Spleen (tissue), 13 donors: ENCODE measurements at regions of chr2 and their contacts with region 1.

Region 1: GRCh38 chr2:19863303-19864041 is 38.3 kb downstream of the TTC32 start:
- DNase-seq: peak; percentile 94
- H3K4me3 ChIP-seq: peak overlapping the region in 1 of 8 donors; percentile 27
- H3K27ac ChIP-seq: no peak overlapping the region
- H3K4me1 ChIP-seq: peaks cover 0 to 16% (median 13%) of the 10 kb centered on the region in 6 donors
- H3K27me3 ChIP-seq: peaks cover 0 to 16% (median 0%) of the 10 kb centered on the region in 7 donors
- CTCF ChIP-seq: peak; percentile 82 to 97 (median 93)
- POLR2A ChIP-seq: no peak

Region 2: DNA sequence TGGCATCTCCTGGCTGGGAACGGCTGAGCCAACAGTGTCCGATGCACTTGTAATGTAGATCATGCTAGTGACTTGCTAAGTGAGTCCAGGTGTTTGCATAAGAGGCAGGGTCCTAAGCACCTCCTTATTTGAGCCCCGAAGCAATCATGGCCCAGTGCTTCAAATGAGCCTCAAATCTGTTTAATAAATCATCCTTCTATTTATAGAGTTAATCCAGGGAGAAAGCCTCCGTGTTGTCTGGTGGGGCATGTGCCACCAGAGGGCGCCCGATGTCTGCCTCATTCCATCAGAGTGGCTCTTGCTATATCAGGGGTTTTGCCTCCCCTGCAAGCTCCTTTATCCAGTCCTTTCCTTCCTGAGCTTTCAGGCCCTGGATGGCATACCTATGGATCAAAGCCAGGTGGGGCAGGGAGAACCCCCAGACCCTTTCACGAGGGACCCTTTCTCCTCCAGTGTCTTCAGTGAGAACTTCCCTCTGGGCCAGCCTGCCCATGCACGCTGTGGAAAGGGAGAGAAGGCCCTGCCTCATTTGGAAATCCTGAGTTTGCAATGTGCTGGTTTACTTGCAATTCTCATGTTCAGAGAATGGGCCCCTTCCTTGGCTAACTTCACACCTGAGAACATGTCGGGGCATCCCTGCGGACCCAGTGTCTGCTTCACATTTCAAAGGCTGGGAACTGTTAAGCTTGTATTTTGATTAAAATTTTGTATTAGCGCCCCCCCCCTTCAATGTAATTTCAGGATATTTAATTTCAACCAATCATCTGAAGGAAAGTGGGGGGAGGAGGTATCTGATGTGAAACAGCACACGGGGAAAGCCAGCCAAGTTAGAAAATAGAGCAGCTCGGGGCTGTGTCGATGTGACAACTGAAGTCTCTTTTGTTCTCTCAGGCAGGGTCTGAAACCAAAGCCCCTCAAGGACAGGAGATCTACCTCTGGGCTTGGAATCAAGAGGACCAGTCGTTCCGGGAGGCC is 1342.7 kb before region 1 on chr2:
- intact Hi-C with region 1: loop called (anchors 5 kb)
- DNase-seq: peak; percentile 87
- H3K4me3 ChIP-seq: no peak overlapping the region
- H3K27ac ChIP-seq: no peak overlapping the region
- H3K4me1 ChIP-seq: no peaks in the 10 kb centered on the region
- H3K27me3 ChIP-seq: peaks cover 0 to 36% (median 0%) of the 10 kb centered on the region in 7 donors
- CTCF ChIP-seq: peak; percentile 72 to 88 (median 77)
- POLR2A ChIP-seq: no peak

Region 3: DNA sequence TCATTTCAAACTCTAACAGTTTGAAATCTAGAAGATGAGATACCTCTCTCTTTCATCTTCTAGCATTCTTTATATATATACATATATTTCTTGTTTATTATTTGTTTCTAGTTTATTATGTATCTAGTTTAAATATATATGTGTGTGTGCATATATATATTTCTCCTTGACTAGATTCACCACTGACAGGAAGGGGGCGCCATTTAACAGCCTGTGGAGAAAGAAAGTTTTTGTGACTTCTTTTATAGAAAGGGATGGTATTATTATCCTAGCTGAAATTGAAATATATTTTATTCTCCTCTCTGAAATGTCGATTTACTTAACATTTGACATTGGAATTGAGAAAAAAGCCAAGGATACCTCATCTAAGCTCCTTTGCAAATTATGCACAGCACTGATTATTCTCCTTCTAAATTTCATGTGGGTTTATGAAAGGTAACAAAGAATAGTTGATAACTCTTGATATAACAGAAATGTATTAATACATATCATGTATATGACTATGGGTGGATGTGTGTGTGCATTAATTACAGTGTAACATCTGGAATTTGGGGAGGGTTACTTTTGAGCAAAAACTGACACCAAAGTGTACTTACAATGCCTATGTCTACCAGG is 1113.5 kb before region 1 on chr2:
- intact Hi-C with region 1: loop called (anchors 5 kb)
- DNase-seq: no peak
- H3K4me3 ChIP-seq: no peak overlapping the region
- H3K27ac ChIP-seq: no peak overlapping the region
- H3K4me1 ChIP-seq: no peaks in the 10 kb centered on the region
- H3K27me3 ChIP-seq: no peaks in the 10 kb centered on the region
- CTCF ChIP-seq: peak in 10 of 11 experiments; percentile 17 to 63 (median 54)
- POLR2A ChIP-seq: no peak

Region 4: GRCh38 chr2:19347619-19348562 is 515.6 kb before region 1 on chr2:
- intact Hi-C with region 1: loop called (anchors 10 kb)
- DNase-seq: peak; percentile 97
- H3K4me3 ChIP-seq: peak overlapping the region; percentile 44 to 85 (median 64)
- H3K27ac ChIP-seq: peak overlapping the region; percentile 87 to 96 (median 94)
- H3K4me1 ChIP-seq: peaks cover 14 to 44% (median 37%) of the 10 kb centered on the region in 6 donors
- H3K27me3 ChIP-seq: peaks cover 13 to 45% (median 37%) of the 10 kb centered on the region in 7 donors
- CTCF ChIP-seq: peak in 2 of 11 experiments; percentile 11 to 18
- POLR2A ChIP-seq: peak in 2 of 3 donors; percentile 83 to 91

Region 5: GRCh38 chr2:19377717-19378116 is 485.8 kb before region 1 on chr2:
- intact Hi-C with region 1: loop called (anchors 10 kb)
- DNase-seq: no peak
- H3K4me3 ChIP-seq: no peak overlapping the region
- H3K27ac ChIP-seq: no peak overlapping the region
- H3K4me1 ChIP-seq: no peaks in the 10 kb centered on the region
- H3K27me3 ChIP-seq: peaks cover 0 to 23% (median 3%) of the 10 kb centered on the region in 7 donors
- CTCF ChIP-seq: no peak
- POLR2A ChIP-seq: no peak

Region 6: GRCh38 chr2:19664651-19665050 is 198.8 kb before region 1 on chr2:
- intact Hi-C with region 1: no loop called
- DNase-seq: no peak
- H3K4me3 ChIP-seq: no peak overlapping the region
- H3K27ac ChIP-seq: no peak overlapping the region
- H3K4me1 ChIP-seq: no peaks in the 10 kb centered on the region
- H3K27me3 ChIP-seq: no peaks in the 10 kb centered on the region
- CTCF ChIP-seq: no peak
- POLR2A ChIP-seq: no peak

Region 7: DNA sequence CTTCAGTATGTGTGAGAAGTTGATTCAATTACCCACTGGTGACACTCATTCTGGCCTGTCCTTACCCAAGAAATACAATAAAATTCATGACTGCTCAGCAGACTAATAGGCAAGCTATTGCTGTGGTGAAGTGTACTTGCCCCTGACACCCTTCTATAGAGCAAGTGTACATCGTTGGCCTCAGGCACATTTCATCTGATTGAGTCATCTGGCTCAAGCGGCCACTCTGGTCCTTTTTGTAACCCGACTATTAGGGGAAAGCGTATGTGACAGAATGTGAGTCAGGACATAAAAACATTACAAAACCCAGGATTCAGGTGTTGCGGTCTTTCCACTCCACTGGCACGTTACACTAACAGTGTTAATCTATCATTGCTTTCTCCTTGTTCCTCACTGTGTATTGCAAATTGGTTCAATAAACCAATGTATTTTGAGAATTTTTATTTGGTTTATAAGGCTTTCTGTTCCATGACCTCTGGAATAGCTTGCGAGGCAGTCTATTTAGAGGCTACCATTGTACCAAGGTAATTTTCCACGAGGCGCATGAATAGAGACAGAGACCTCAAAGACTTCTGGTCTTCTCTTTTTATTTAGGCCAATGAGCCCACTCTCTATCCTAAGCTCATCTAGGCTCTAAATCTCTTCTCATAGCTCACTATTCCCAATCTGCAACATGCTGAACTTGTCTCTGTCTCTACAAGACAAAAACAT is 48.5 kb after region 1 on chr2:
- intact Hi-C with region 1: no loop called
- DNase-seq: no peak
- H3K4me3 ChIP-seq: no peak overlapping the region
- H3K27ac ChIP-seq: no peak overlapping the region
- H3K4me1 ChIP-seq: no peaks in the 10 kb centered on the region
- H3K27me3 ChIP-seq: no peaks in the 10 kb centered on the region
- CTCF ChIP-seq: no peak
- POLR2A ChIP-seq: no peak